H1 (cell line): ENCODE measurements at regions of chr2 and their contacts with region 1.

Region 1: DNA sequence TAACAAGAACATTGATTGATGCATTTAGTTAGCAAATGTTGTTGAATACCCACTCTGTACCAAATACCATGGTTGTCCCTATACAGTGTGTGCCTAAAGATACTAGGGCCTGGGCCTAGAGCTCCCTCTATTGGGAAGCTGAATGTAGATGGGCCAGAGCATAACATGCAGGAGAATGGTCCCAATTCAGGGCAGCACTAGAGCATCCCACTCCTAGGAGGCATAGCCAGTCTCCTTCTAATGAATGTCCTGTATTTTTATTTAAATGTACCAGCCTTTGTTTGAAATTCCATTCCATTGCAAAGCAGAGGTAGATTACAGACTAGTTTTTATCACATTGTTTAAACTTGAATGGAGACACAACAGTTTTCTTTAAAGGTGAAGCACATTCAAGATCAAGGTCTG is 90.6 kb downstream of the FEZ2 start:
- DNase-seq: peak in 1 of 2 experiments; percentile 70
- H3K4me3 ChIP-seq: no peak overlapping the region
- H3K27ac ChIP-seq: no peak overlapping the region
- H3K4me1 ChIP-seq: peaks cover 0 to 4% (median 0%) of the 10 kb centered on the region in 4 experiments; a peak in 1 of 7 replicates
- H3K27me3 ChIP-seq: no peaks in the 10 kb centered on the region
- CTCF ChIP-seq: peak; percentile 47 to 94 (median 81)
- EP300 ChIP-seq: no peak
- POLR2A ChIP-seq: no peak
- RAD21 ChIP-seq: peak; percentile 93 to 94

Region 2: GRCh38 chr2:36478332-36478738 is 29.1 kb before region 1 on chr2:
- CTCF ChIA-PET with region 1: no interaction called
- POLR2A ChIA-PET with region 1: no interaction called
- DNase-seq: no peak
- H3K4me3 ChIP-seq: no peak overlapping the region
- H3K27ac ChIP-seq: no peak overlapping the region
- H3K4me1 ChIP-seq: peaks cover 0 to 4% (median 2%) of the 10 kb centered on the region in 4 experiments; a peak in 3 of 7 replicates
- H3K27me3 ChIP-seq: no peaks in the 10 kb centered on the region
- CTCF ChIP-seq: no peak
- EP300 ChIP-seq: no peak
- POLR2A ChIP-seq: no peak
- RAD21 ChIP-seq: no peak

Region 3: DNA sequence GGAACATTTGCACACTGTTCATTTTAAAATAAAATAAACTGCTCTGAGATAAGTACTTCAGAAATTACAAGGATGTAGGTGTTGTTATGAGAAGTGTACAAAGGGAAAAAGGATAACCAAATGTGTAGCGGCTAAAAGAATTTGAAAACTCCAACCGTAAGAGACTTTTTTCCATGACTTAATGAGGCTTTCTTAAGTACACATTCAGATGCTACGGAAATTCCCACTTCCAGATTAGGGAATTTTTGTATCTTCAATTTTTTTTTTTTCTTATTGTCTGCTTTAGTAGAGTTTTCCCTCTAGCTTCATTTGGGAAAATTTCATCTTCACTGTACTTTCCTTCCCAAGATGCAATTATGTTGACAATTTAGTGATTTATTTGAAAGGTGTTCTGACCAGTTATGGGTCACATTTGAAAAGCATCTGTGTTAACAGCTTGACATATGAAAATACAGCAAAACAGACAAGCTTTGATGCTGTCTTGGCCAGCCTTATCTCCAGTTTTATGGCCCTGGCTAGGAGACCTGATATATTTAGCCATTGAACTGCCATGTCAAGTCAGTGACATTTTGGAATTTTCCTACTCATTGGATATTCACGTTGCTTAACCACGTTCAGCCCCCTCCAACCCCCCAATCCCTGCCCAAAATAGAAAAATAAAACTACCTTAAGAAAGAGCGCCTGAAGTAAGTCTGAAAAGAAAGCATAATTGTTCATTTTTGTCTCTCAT is 15.0 kb before region 1 on chr2:
- CTCF ChIA-PET with region 1: interaction called, 16 read pairs
- POLR2A ChIA-PET with region 1: interaction called, 3 read pairs
- DNase-seq: no peak
- H3K4me3 ChIP-seq: no peak overlapping the region
- H3K27ac ChIP-seq: no peak overlapping the region
- H3K4me1 ChIP-seq: peaks cover 0 to 2% (median 0%) of the 10 kb centered on the region in 4 experiments; a peak in 1 of 7 replicates
- H3K27me3 ChIP-seq: no peaks in the 10 kb centered on the region
- CTCF ChIP-seq: no peak
- EP300 ChIP-seq: no peak
- POLR2A ChIP-seq: no peak
- RAD21 ChIP-seq: no peak

Region 4: DNA sequence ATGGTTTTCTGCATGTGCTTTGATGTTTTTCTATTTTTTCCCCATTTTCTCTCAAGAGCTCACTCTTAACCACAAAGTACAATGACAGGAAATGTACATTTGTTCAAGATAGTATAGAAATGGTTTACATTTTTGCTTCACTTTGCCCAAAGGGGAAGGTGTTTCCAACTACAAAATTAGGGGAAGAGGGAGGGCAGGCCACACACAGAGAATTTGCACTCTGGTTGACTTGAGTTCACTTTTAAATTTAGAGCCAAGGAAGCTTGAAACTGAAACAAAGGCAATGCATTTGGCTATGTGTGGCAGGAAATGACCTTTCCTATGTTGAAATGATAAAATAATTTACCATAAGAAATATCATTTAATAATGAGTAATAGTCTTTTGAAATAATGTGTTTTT is 170.0 kb after region 1 on chr2:
- CTCF ChIA-PET with region 1: no interaction called
- POLR2A ChIA-PET with region 1: no interaction called
- DNase-seq: no peak
- H3K4me3 ChIP-seq: no peak overlapping the region
- H3K27ac ChIP-seq: no peak overlapping the region
- H3K4me1 ChIP-seq: peaks cover 0 to 3% (median 1%) of the 10 kb centered on the region in 4 experiments; a peak in 2 of 7 replicates
- H3K27me3 ChIP-seq: no peaks in the 10 kb centered on the region
- CTCF ChIP-seq: no peak
- EP300 ChIP-seq: no peak
- POLR2A ChIP-seq: no peak
- RAD21 ChIP-seq: no peak